ENCODE measurements at regions of chr17 and their contacts with region 1.

Region 1: GRCh38 chr17:43694077-43694870 is 32.6 kb upstream of the MEOX1 start:
- DNase-seq: peak; percentile 84

Region 2: DNA sequence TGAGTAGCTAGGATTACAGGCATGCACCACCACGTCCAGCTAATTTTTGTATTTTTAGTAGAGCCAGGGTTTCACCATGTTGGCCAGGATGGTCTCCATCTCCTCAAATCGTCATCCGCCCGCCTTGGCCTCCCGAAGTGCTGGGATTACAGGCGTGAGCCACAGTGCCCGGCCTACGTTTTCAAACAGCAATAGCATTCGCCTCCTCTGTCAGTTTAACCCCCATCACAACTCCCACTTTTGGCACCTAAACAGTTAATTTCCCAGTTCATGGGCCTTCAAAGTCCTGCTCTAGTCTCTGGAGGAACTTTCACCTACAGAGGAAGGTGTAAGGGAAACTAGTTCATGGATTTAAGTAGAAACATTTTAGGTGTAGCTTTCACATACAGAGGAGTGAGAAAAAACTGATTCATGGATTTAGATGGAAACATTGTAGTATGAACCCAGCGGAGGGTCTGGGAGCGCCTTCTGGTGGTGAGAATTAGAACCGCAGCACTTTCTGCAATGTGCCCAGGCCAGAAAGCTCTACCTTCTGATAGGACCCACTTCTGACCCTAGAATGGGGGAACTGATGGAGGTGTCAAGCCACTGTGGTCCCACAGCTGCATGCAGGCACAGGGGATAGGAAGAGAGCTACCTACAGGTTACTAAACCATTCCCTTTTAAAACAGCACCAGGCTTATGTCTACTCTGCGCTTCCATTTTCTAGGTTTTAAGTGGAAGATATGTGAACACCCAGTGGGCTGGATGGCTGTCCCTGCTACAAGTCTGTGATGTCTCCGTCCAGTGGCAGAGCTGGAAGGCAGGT is 20.6 kb before region 1 on chr17:
- CTCF ChIA-PET with region 1: interaction called, 10 read pairs
- POLR2A ChIA-PET with region 1: no interaction called
- DNase-seq: peak; percentile 67

Region 3: DNA sequence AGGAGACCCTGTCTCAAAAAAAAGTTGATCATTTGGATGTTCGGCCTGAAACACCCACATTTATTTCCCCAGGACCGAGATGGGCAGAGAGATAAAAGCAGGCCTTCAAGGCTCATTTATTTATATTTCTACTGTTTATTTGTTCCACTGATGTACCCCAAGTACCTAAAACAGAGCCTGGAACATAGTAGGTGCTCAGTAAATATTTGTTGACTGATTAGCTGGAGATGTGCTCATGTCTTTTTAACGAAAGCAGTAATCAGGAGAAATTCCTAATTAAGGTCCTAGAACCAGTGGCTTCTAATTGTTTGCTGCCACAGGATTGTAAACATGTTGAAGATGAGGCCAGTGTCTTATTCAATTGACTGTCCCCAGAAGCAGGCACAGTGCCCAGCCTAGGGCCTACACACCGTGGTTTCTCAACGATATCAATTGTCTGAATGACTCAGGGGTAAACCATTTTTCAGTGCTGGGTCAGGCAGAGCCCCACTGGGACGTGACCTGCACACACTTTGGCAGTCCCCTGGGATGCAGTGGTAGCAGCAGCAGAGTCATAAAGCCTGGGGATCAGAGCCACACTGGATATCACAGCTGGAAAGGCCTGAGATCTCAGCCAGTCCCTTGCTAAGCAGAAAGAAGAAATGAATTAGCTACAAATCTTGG is 29.6 kb after region 1 on chr17:
- CTCF ChIA-PET with region 1: no interaction called
- POLR2A ChIA-PET with region 1: no interaction called
- DNase-seq: peak; percentile 33

Region 4: GRCh38 chr17:43760254-43760852 is 66.1 kb after region 1 on chr17:
- CTCF ChIA-PET with region 1: interaction called, 118 read pairs
- POLR2A ChIA-PET with region 1: no interaction called
- DNase-seq: peak; percentile 90

Region 5: DNA sequence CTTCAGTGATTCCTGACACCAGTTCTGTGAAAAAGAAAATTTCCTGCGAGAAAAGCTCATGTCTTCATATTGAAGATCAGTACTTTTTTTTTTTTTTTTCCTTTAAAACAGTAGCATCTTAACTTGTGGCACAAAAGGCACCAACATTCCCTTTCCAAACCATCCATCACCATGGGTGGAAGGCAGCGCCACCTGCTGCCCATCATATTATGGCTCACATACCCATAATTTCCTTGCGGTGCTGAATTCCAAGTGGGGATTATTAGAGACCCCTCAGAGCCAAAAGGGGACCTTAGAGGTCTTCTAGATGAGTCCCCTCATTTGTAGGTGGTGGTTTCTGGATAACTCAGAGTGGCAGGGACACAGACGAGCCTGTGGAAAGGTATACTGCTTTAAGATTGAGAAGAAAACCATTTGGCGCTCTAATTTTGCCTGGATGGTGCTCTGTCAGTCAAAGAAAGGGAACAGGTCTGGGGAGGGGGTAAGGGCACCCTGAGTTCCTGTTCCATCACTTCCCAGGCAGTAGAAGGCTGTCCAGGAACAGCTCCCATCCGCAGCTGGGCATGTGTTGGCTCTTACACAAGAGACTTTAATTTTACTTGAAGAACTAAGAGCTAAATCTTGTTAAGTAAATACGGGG is 72.3 kb after region 1 on chr17:
- CTCF ChIA-PET with region 1: interaction called, 118 read pairs
- POLR2A ChIA-PET with region 1: no interaction called
- DNase-seq: peak; percentile 72

Measured in HEK293T (cell line).